Calu3 (cell line): ENCODE measurements at regions of chr2 and their contacts with region 1.

Region 1: GRCh38 chr2:47189635-47190034 is 34.5 kb upstream of the STPG4 start:
- DNase-seq: no peak
- H3K4me3 Mint-ChIP-seq: no peak overlapping the region
- H3K27ac Mint-ChIP-seq: peak overlapping the region; percentile 89
- H3K4me1 Mint-ChIP-seq: peaks cover 55% of the 10 kb centered on the region
- H3K27me3 Mint-ChIP-seq: no peaks in the 10 kb centered on the region
- CTCF ChIP-seq: no peak

Region 2: GRCh38 chr2:47109007-47109375 is 80.6 kb before region 1 on chr2:
- CTCF ChIA-PET with region 1: no interaction called
- intact Hi-C with region 1: no loop called
- DNase-seq: no peak
- H3K4me3 Mint-ChIP-seq: peak overlapping the region; percentile 73
- H3K27ac Mint-ChIP-seq: peak overlapping the region; percentile 97
- H3K4me1 Mint-ChIP-seq: peaks cover 29% of the 10 kb centered on the region
- H3K27me3 Mint-ChIP-seq: no peaks in the 10 kb centered on the region
- CTCF ChIP-seq: no peak

Region 3: GRCh38 chr2:47272031-47272864 is 82.6 kb after region 1 on chr2:
- CTCF ChIA-PET with region 1: no interaction called
- intact Hi-C with region 1: loop called (anchors 1 kb)
- DNase-seq: peak; percentile 79
- H3K4me3 Mint-ChIP-seq: peak overlapping the region; percentile 87
- H3K27ac Mint-ChIP-seq: peak overlapping the region; percentile 92
- H3K4me1 Mint-ChIP-seq: peaks cover 45% of the 10 kb centered on the region
- H3K27me3 Mint-ChIP-seq: no peaks in the 10 kb centered on the region
- CTCF ChIP-seq: peak; percentile 97

Region 4: DNA sequence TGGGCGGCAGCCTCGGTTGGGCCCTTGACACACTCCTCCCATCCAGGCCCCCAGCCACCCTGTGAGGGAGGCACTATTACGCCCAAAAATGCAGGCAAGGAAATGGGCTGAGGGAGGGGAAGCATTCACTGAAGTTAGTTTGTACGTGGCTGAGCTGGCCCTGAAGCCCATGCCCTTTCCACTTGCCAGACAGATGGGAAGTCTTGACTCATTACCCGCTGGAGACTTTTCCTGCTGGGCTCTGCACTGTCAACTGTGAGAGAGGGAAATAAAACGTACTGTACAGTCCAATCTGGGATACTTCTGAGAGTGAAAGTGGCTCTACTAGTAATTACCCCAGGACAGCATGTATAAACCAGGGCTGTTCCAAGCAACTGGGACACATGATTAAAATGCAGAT is 339.2 kb after region 1 on chr2:
- CTCF ChIA-PET with region 1: no interaction called
- intact Hi-C with region 1: no loop called
- DNase-seq: no peak
- H3K4me3 Mint-ChIP-seq: no peak overlapping the region
- H3K27ac Mint-ChIP-seq: no peak overlapping the region
- H3K4me1 Mint-ChIP-seq: no peaks in the 10 kb centered on the region
- H3K27me3 Mint-ChIP-seq: peaks cover 17% of the 10 kb centered on the region
- CTCF ChIP-seq: no peak